B cell (primary cell): ENCODE measurements at regions of chr1 and their contacts with region 1.

Region 1: DNA sequence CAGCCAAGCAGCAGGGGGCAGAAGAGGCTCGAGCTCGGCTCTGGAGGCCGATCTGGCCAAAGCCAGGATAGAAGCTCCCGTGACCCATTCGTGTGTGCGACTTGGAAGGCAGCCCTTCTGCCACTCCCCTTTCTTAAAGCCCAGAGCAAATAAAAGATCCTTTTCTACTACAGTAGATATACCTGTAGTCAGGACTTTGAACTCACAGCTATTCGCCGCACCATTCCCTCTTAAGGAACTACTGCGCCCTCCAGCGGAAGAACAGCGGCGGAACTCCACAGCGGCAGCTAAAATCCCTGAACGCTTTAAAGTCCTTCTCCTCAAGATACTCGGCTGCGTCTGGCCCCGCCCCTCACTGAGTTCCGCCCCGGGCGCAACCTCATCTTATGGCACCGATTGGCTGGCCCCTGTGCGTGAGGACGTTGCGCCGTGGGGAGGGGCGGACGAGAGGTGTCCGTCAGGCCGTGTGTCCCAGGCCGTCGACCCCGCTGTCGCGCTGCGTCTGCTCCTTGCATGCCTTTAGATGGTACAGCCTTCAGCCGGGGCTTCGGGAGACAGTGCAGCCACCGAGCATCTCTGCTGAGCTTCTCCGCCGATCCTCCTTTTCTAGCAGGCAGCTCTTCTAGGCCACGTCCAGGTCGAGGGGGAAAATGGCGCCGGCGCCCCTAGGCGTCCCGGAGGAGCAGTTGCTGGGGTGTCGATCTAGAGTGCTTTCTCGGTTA is at the start of gene LRIG2:
- DNase-seq: peak; percentile 97
- ATAC-seq: peak; percentile 96
- H3K4me3 ChIP-seq: peak within 1 kb of the TSS; percentile 74 to 94 (median 87)
- H3K4me3 Mint-ChIP-seq: peak within 1 kb of the TSS; percentile 99
- H3K27ac ChIP-seq: peak within 1 kb of the TSS; percentile 74 to 77
- H3K27ac Mint-ChIP-seq: peak within 1 kb of the TSS; percentile 97
- H3K4me1 ChIP-seq: peaks cover 15 to 18% of the 10 kb centered on the region in 2 donors
- H3K4me1 Mint-ChIP-seq: peaks cover 33% of the 10 kb centered on the region
- H3K27me3 ChIP-seq: no peaks in the 10 kb centered on the region
- H3K27me3 Mint-ChIP-seq: no peaks in the 10 kb centered on the region
- CTCF ChIP-seq: peak; percentile 95
- total RNA-seq, gene LRIG2: 30.6 and 32.2 TPM in 2 replicates

Region 2: GRCh38 chr1:111448918-111449702 is 1623.8 kb before region 1 on chr1 and contains the starts of genes ATP5PB and WDR77:
- CTCF ChIA-PET with region 1: no interaction called
- POLR2A ChIA-PET with region 1: no interaction called
- intact Hi-C with region 1: loop called (anchors 10 kb)
- DNase-seq: peak; percentile 96
- ATAC-seq: peak; percentile 95
- H3K4me3 ChIP-seq: peak within 1 kb of the TSS; percentile 76 to 94 (median 85)
- H3K4me3 Mint-ChIP-seq: peak within 1 kb of the TSS; percentile 100
- H3K27ac ChIP-seq: peak within 1 kb of the TSS; percentile 60 to 95
- H3K27ac Mint-ChIP-seq: peak within 1 kb of the TSS; percentile 99
- H3K4me1 ChIP-seq: peaks cover 41 to 48% of the 10 kb centered on the region in 2 donors
- H3K4me1 Mint-ChIP-seq: peaks cover 73% of the 10 kb centered on the region
- H3K27me3 ChIP-seq: no peaks in the 10 kb centered on the region
- H3K27me3 Mint-ChIP-seq: no peaks in the 10 kb centered on the region
- CTCF ChIP-seq: no peak
- total RNA-seq, gene ATP5PB: 110 and 113 TPM in 2 replicates
- total RNA-seq, gene WDR77: 40.5 and 41.4 TPM in 2 replicates

Region 3: DNA sequence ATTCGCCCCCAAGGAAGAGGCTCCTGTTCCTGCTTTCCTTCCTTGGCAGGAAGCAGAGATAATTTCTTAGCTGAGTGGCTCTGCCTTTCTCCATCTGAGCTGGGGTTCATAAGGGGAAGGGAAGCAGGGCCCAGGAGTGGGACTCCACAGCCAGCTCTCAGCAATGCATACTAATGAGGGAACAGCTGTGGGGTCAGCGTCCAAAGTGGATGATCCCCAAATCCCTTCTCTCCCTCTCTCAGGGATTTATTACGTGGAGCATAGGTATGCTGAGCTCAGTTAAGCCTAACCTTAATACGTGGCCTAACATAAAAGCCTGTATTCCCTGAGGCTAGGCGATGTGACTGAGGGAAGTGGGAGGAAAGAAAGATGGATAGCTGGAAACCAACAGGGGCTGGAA is 764.2 kb before region 1 on chr1:
- CTCF ChIA-PET with region 1: no interaction called
- POLR2A ChIA-PET with region 1: no interaction called
- intact Hi-C with region 1: no loop called
- DNase-seq: no peak
- ATAC-seq: no peak
- H3K4me3 ChIP-seq: no peak overlapping the region
- H3K4me3 Mint-ChIP-seq: no peak overlapping the region
- H3K27ac ChIP-seq: no peak overlapping the region
- H3K27ac Mint-ChIP-seq: no peak overlapping the region
- H3K4me1 ChIP-seq: no peaks in the 10 kb centered on the region
- H3K4me1 Mint-ChIP-seq: no peaks in the 10 kb centered on the region
- H3K27me3 ChIP-seq: peaks cover 0 to 8% (median 0%) of the 10 kb centered on the region in 4 experiments
- H3K27me3 Mint-ChIP-seq: peaks cover 36% of the 10 kb centered on the region
- CTCF ChIP-seq: no peak

Region 4: DNA sequence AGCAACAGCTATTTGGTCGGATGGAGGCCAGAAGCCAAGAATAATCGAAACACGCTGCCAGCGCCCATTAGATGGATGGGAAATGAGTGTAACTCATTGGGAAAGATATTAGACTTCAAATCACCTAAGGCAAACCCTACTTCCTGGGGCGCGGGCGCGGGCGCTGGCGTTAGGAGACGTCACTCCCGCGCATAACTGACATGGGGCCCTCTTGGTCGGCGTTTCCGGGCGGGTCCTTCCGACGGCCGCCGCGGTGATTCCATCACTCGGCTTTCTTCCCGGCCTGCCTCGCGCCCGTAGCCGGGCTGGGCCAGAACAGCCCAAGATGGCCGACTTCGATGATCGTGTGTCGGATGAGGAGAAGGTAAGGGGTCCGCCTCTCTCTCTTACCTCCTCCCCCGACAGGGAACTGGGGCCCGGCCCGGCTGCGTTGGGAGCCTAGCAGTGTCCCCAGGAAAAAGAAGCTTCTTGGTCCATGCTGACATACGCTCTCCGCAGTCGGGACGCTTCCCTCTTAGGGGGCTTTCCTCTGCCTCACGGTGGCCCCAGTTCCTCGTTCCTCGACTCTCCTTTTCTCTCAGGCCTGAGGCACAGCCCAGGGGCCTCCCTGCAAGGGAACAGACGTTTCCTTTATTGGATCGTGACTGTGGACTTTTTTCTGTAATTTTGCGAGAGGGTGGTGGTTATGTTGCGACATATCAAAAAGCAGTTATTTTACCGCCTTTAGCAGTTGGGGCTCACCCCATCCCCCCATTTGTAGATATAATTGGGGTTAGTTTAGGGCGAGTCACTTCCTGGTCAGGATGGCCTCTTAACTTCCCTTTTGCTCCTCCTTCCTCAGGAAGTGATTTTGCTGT is 453.2 kb before region 1 on chr1 and contains the start of gene CAPZA1:
- CTCF ChIA-PET with region 1: interaction called, 3 read pairs
- POLR2A ChIA-PET with region 1: interaction called, 5 read pairs
- intact Hi-C with region 1: loop called (anchors 2 kb)
- DNase-seq: peak; percentile 95
- ATAC-seq: peak; percentile 85
- H3K4me3 ChIP-seq: peak within 1 kb of the TSS; percentile 69 to 97 (median 91)
- H3K4me3 Mint-ChIP-seq: peak within 1 kb of the TSS; percentile 97
- H3K27ac ChIP-seq: peak within 1 kb of the TSS; percentile 94 to 99
- H3K27ac Mint-ChIP-seq: peak within 1 kb of the TSS; percentile 99
- H3K4me1 ChIP-seq: peaks cover 37 to 42% of the 10 kb centered on the region in 2 donors
- H3K4me1 Mint-ChIP-seq: peaks cover 46% of the 10 kb centered on the region
- H3K27me3 ChIP-seq: no peaks in the 10 kb centered on the region
- H3K27me3 Mint-ChIP-seq: no peaks in the 10 kb centered on the region
- CTCF ChIP-seq: no peak
- total RNA-seq, gene CAPZA1: 172 and 182 TPM in 2 replicates

Region 5: DNA sequence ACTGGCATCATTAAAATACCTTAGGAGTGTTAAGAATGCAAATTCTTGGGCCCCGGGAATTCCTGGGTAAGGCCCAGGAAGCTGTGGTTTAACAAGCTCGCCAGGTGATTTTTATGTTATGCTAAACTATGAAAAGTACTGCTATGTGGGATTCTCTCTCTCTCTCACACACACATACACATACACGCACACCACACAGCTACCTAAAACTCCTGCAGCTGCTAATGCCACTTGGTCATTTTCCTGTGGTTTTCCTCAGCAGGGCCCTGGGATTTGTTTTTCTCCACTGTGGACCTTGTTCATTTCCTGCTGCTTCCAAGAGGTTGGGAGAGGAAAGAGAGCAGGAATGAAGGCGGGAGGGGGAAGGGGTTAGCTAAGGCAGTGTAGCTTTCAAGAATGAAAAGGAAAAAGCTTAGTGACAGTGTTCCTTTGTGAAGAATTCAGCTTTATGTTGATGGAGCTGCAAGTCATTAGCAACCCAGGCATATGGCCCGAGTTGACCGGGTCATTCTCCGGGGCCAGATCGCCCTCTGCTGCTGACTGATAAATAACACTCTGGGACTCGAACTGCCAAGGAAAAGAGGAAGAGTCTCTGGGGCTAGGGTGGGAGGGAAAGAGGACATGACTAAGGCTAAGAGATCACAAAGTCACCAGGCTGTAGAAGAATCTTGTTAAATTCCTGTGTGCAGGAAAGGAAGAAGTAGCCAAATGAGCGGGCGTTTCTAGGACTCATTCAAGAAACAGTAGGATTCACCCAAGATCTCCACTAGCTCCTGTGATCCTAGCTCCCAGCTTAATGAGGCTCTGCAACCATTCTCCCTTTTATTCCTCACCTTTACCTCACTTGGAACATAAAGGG is 30.4 kb before region 1 on chr1:
- CTCF ChIA-PET with region 1: interaction called, 11 read pairs
- POLR2A ChIA-PET with region 1: interaction called, 3 read pairs
- intact Hi-C with region 1: no loop called
- DNase-seq: peak; percentile 65
- ATAC-seq: peak; percentile 73
- H3K4me3 ChIP-seq: no peak overlapping the region
- H3K4me3 Mint-ChIP-seq: no peak overlapping the region
- H3K27ac ChIP-seq: no peak overlapping the region
- H3K27ac Mint-ChIP-seq: no peak overlapping the region
- H3K4me1 ChIP-seq: peaks cover 5 to 12% of the 10 kb centered on the region in 2 donors
- H3K4me1 Mint-ChIP-seq: peaks cover 11% of the 10 kb centered on the region
- H3K27me3 ChIP-seq: peaks cover 0 to 3% (median 0%) of the 10 kb centered on the region in 4 experiments
- H3K27me3 Mint-ChIP-seq: peaks cover 3% of the 10 kb centered on the region
- CTCF ChIP-seq: peak; percentile 32

Region 6: GRCh38 chr1:113389953-113390834 is 317.3 kb after region 1 on chr1 and contains the start of gene MAGI3:
- CTCF ChIA-PET with region 1: no interaction called
- POLR2A ChIA-PET with region 1: no interaction called
- intact Hi-C with region 1: loop called (anchors 2 kb)
- DNase-seq: peak; percentile 88
- ATAC-seq: peak; percentile 96
- H3K4me3 ChIP-seq: peak within 1 kb of the TSS; percentile 22 to 83 (median 76)
- H3K4me3 Mint-ChIP-seq: peak within 1 kb of the TSS; percentile 89
- H3K27ac ChIP-seq: no peak within 1 kb of the TSS
- H3K27ac Mint-ChIP-seq: peak within 1 kb of the TSS; percentile 42
- H3K4me1 ChIP-seq: peaks cover 16 to 19% of the 10 kb centered on the region in 2 donors
- H3K4me1 Mint-ChIP-seq: peaks cover 21% of the 10 kb centered on the region
- H3K27me3 ChIP-seq: peaks cover 0 to 22% (median 15%) of the 10 kb centered on the region in 4 experiments
- H3K27me3 Mint-ChIP-seq: peaks cover 43% of the 10 kb centered on the region
- CTCF ChIP-seq: no peak
- total RNA-seq, gene MAGI3: 0.67 and 0.83 TPM in 2 replicates